Dorsolateral prefrontal cortex (tissue), 120 donors: ENCODE measurements at regions of chr2 and their contacts with region 1.

Region 1: DNA sequence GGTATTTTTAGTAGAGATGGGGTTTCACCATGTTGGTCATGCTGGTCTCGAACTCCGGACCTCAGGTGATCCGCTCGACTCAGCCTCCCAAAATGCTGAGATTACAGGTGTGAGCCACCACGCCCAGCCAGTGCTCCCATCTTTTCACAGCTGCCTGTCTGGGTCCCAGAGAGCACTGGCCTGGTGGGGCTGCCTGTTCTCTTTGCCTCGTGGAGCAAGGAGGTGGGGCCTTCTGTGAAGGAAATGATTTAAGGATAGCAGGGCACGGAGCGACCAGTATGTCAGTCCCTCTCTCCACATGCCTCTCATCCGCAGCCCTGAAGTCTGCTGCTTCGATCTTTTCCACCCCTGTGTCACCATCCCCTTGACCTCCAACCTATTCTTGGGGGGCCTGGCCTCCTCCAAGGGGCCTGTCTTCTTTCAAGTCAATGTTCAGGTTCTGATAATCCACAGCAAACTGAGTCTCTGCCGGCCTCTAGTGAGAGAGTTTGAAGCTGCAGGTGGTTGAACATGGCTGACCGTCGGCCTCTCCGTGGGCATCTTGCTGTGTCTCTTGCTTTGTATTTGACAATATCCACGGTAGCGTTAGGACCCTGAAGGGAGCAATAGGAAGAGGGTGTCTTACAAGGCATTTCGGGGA is 28.2 kb upstream of the GIGYF2 start:
- DNase-seq: peak in 5 of 10 donors; percentile 32 to 72 (median 56)
- H3K4me3 ChIP-seq: peak overlapping the region in 7 of 59 donors; percentile 7 to 55 (median 43)
- H3K27ac ChIP-seq: peak overlapping the region in 58 of 59 donors; percentile 38 to 98 (median 92)
- H3K27me3 ChIP-seq: no peaks in the 10 kb centered on the region
- CTCF ChIP-seq: peak in 53 of 56 donors; percentile 32 to 81 (median 58)

Region 2: DNA sequence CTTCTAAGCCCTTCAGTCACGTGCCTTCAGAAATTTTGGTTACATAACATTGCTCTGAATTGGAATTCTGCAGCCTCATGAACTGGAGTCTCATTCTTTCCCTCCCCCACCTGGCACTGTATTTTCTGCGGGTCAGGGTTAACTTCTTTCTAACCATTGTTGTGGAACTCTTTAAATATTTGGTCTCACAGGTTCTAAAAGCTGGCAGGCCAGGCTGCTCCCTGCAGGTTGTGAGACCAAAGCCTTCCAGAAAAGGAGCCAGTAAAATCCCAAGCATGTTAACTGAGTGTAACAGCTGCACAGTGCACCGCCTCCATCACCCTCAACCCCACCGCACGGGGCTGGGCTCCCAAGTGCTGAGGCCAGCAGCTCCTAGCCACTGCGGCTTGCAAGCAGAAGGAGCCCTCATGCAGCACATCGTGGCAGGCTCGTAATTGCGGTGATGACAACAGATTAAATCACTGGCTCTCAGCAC is 464.4 kb before region 1 on chr2:
- intact Hi-C with region 1: no loop called
- DNase-seq: peak in 7 of 10 donors; percentile 15 to 52 (median 36)
- H3K4me3 ChIP-seq: peak overlapping the region in 3 of 59 donors; percentile 1 to 7 (median 3)
- H3K27ac ChIP-seq: peak overlapping the region in 10 of 59 donors; percentile 3 to 51 (median 20)
- H3K27me3 ChIP-seq: no peaks in the 10 kb centered on the region
- CTCF ChIP-seq: no peak

Region 3: DNA sequence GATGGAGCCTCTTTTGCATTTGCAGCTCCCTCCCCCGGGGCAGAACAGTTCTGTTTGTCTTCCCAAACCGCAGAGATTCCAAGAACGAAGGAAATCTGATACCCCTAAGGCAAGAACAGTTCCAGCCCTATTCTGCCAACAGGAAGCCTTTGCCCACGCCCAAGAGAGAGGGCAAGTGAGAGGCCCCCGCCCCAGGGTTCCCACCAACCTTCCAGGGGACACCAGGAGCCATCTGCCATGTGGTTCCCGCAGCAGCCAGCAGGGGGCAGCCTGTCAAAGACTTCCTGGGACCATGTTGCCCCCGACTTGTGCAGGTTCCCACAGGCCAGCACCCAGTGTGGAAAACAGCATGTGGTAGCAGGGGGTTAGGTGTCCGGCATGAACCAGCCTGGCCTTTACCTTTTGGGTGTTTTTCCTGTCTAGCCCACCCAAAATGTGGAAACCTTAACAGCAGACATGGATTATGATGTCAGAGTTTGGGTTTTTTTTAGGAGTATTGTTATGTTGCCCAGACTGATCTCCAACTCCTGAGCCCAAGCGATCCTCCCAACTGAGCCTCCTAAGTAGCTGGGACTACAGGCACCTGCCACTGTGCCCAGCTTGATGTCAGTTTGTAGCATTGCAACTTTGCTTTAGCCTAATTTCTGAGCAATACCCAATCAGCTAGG is 57.2 kb before region 1 on chr2:
- intact Hi-C with region 1: loop called (anchors 1 to 2 kb)
- DNase-seq: peak in 9 of 10 donors; percentile 31 to 88 (median 76)
- H3K4me3 ChIP-seq: no peak overlapping the region
- H3K27ac ChIP-seq: peak overlapping the region in 43 of 59 donors; percentile 2 to 79 (median 51)
- H3K27me3 ChIP-seq: no peaks in the 10 kb centered on the region
- CTCF ChIP-seq: peak; percentile 49 to 93 (median 86)